SK-N-SH (cell line): ENCODE measurements at regions of chr2 and their contacts with region 1.

Region 1: GRCh38 chr2:164560181-164560792 is 61.0 kb downstream of the GRB14 start:
- DNase-seq: peak; percentile 10
- H3K4me3 ChIP-seq: no peak overlapping the region
- H3K27ac ChIP-seq: no peak overlapping the region
- H3K4me1 ChIP-seq: no peaks in the 10 kb centered on the region; a peak in 1 of 4 replicates
- H3K27me3 ChIP-seq: no peaks in the 10 kb centered on the region
- CTCF ChIP-seq: peak; percentile 86
- EP300 ChIP-seq: no peak
- RAD21 ChIP-seq: peak; percentile 69

Region 2: DNA sequence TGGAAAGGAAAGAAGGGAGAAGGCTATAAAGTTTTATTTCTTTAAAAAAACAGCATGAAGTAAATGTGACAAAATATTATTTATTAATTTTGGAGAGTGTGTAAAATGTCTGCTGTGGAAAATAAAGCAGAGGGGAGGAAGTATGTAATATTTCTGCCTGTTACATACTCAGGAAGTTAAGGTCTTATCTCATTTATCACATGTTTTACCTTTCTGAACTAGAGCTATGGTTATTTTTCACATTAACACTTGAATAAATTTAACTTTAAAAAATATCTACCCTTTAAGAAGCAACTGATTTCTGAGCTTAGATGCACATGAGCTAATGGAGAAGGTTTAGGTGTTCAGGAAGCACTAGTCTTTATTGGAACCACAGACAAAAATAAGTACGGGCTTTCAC is 87.3 kb before region 1 on chr2:
- CTCF ChIA-PET with region 1: no interaction called
- POLR2A ChIA-PET with region 1: no interaction called
- DNase-seq: no peak
- H3K4me3 ChIP-seq: no peak overlapping the region
- H3K27ac ChIP-seq: no peak overlapping the region
- H3K4me1 ChIP-seq: no peaks in the 10 kb centered on the region
- H3K27me3 ChIP-seq: peaks cover 8% of the 10 kb centered on the region; the same call in 1 of the 2 replicates
- CTCF ChIP-seq: no peak
- EP300 ChIP-seq: no peak
- RAD21 ChIP-seq: no peak

Region 3: DNA sequence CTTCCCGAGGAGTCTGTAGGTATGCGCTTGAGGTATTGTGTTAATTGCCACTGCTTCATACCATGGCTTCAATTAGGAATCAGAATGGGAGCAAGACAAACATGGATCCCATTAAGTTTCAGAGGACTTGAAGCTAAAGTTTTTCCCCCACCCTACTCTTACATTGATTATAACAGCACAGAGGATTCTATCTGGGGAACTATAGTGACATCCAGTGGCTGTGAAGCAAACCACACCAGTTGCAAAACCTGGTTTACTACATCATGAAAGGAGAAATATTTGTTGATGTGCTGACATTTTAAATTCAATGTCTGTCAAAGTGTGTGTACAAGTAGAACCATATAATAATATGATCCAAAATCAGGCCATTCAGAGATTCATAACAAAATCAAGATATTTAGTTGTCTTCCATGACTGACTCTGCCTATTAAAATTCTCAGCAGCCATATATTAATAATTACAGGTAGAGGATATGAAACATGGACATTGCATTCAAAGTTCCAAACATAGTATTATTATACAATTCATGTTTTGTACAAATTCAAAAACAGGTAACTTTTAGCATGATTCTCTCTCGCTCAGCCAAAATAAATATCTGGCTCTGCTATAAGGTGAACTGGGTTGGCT is 21.9 kb before region 1 on chr2:
- CTCF ChIA-PET with region 1: interaction called, 16 read pairs
- POLR2A ChIA-PET with region 1: no interaction called
- DNase-seq: peak; percentile 55
- H3K4me3 ChIP-seq: no peak overlapping the region; a peak in 1 of 4 replicates
- H3K27ac ChIP-seq: no peak overlapping the region
- H3K4me1 ChIP-seq: peaks cover 3 to 7% of the 10 kb centered on the region in 2 experiments; a peak in 3 of 4 replicates
- H3K27me3 ChIP-seq: no peaks in the 10 kb centered on the region
- CTCF ChIP-seq: peak; percentile 77
- EP300 ChIP-seq: no peak
- RAD21 ChIP-seq: peak; percentile 81

Region 4: GRCh38 chr2:164574925-164575324 is 14.6 kb after region 1 on chr2:
- CTCF ChIA-PET with region 1: interaction called, 44 read pairs
- POLR2A ChIA-PET with region 1: no interaction called
- DNase-seq: no peak
- H3K4me3 ChIP-seq: no peak overlapping the region
- H3K27ac ChIP-seq: no peak overlapping the region
- H3K4me1 ChIP-seq: no peaks in the 10 kb centered on the region
- H3K27me3 ChIP-seq: no peaks in the 10 kb centered on the region
- CTCF ChIP-seq: no peak
- EP300 ChIP-seq: no peak
- RAD21 ChIP-seq: no peak

Region 5: GRCh38 chr2:164609790-164610189 is 49.5 kb after region 1 on chr2:
- CTCF ChIA-PET with region 1: interaction called, 15 read pairs
- POLR2A ChIA-PET with region 1: no interaction called
- DNase-seq: no peak
- H3K4me3 ChIP-seq: no peak overlapping the region
- H3K27ac ChIP-seq: no peak overlapping the region
- H3K4me1 ChIP-seq: peaks cover 0 to 8% of the 10 kb centered on the region in 2 experiments; a peak in 1 of 4 replicates
- H3K27me3 ChIP-seq: no peaks in the 10 kb centered on the region
- CTCF ChIP-seq: no peak
- EP300 ChIP-seq: no peak
- RAD21 ChIP-seq: no peak

Region 6: GRCh38 chr2:164706522-164706921 is 146.2 kb after region 1 on chr2:
- CTCF ChIA-PET with region 1: interaction called, 19 read pairs
- POLR2A ChIA-PET with region 1: no interaction called
- DNase-seq: no peak
- H3K4me3 ChIP-seq: no peak overlapping the region; a peak in 1 of 4 replicates
- H3K27ac ChIP-seq: peak overlapping the region; percentile 45 to 93; a peak in 3 of 4 replicates
- H3K4me1 ChIP-seq: peaks cover 0 to 13% of the 10 kb centered on the region in 2 experiments; a peak in 2 of 4 replicates
- H3K27me3 ChIP-seq: no peaks in the 10 kb centered on the region
- CTCF ChIP-seq: no peak
- EP300 ChIP-seq: peak in 1 of 2 experiments; percentile 80; a peak in 2 of 4 replicates
- RAD21 ChIP-seq: no peak

Region 7: DNA sequence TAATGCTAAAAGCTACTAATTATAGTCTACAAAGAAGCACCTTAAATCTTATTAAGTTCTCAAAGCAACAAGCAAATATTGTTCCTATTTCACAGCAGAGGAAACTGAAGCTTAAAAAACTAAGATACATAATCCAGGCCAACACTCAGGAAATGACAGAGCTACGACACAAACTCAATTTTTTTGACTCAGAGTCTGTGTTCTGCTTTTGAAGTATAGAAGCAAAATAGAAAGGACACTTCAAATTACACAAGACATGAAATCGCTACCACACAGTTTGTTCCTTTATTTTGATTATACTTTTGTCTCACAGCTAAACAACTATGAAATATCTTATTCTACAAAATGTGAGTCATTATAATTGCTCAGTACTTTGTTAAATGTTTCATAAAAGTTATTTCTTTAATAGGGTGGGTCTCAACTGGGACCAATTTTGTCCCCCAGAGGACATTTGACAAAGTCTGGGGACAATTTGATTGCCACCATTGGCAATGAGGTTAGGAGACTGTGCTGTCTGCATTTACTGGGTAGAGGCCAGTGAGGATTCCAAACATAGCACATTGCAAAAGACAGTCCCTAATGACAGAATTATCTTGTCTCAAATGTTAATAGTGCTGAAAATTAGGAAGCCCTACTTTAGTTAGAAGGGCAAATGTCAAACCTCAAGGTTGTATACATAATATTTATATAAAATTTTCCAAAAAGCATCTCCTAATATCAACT is 162.5 kb after region 1 on chr2:
- CTCF ChIA-PET with region 1: interaction called, 29 read pairs
- POLR2A ChIA-PET with region 1: no interaction called
- DNase-seq: no peak
- H3K4me3 ChIP-seq: no peak overlapping the region
- H3K27ac ChIP-seq: peak overlapping the region; percentile 39 to 41; a peak in 3 of 4 replicates
- H3K4me1 ChIP-seq: peaks cover 0 to 6% of the 10 kb centered on the region in 2 experiments; a peak in 3 of 4 replicates
- H3K27me3 ChIP-seq: no peaks in the 10 kb centered on the region
- CTCF ChIP-seq: no peak
- EP300 ChIP-seq: no peak
- RAD21 ChIP-seq: no peak